ENCODE measurements at regions of chr14 and their contacts with region 1.

Region 1: GRCh38 chr14:78207414-78207813 is 37.2 kb downstream of the NRXN3 start:
- DNase-seq: no peak
- ATAC-seq: no peak
- H3K4me3 ChIP-seq: no peak overlapping the region
- H3K27ac ChIP-seq: no peak overlapping the region
- H3K4me1 ChIP-seq: no peaks in the 10 kb centered on the region
- H3K27me3 ChIP-seq: peaks cover 0 to 2% (median 0%) of the 10 kb centered on the region in 3 donors
- CTCF ChIP-seq: no peak

Region 2: DNA sequence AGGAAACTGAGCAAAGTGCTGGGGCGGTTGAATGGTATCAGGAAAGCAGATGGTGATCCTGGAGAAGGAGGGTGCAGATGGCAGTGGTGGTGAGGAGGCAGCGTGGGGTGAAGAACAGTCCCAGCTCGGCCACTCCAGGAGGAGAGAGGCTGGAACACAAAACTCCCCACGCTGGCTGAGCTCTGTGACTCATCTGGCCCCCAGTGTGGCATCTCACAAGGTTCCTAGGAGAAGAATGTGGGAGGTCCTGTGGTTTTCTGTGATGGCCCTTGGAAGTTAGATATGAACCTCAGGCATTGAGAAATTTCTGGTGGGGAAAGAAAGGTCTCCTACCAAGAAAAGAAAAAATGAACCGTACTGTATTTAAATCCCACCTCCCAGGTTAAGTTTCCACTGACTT is 45.2 kb before region 1 on chr14:
- intact Hi-C with region 1: loop called in 1 of 2 experiments (anchors 2 kb)
- DNase-seq: no peak
- ATAC-seq: no peak
- H3K4me3 ChIP-seq: no peak overlapping the region
- H3K27ac ChIP-seq: no peak overlapping the region
- H3K4me1 ChIP-seq: no peaks in the 10 kb centered on the region
- H3K27me3 ChIP-seq: peaks cover 0 to 13% (median 8%) of the 10 kb centered on the region in 3 donors
- CTCF ChIP-seq: no peak

Region 3: GRCh38 chr14:78259831-78260230 is 52.4 kb after region 1 on chr14:
- intact Hi-C with region 1: no loop called
- DNase-seq: no peak
- ATAC-seq: no peak
- H3K4me3 ChIP-seq: no peak overlapping the region
- H3K27ac ChIP-seq: no peak overlapping the region
- H3K4me1 ChIP-seq: no peaks in the 10 kb centered on the region
- H3K27me3 ChIP-seq: peaks cover 0 to 3% (median 0%) of the 10 kb centered on the region in 3 donors
- CTCF ChIP-seq: no peak

Measured in psoas muscle (tissue), 8 donors.